Endothelial cell of umbilical vein (primary cell): ENCODE measurements at regions of chr4 and their contacts with region 1.

Region 1: DNA sequence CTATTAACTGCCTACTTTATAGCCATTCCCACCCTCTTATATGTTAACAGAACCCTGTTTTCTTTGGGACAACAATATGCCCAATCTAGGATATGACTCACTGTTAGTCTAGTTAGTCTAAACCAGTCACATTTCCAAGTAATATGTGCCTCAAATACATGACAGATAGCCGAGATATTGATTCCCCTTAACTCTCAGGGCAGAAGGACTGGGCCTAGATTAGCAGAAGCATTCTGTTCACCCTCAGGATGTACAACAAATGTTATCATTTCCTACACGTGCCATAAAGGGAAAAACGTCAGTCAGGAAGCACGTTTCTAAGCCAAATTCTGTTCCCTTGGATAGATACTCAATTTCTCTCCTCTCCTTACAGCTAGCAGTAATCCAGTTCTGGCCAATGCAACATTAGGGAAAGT is 114.1 kb downstream of the SLC10A7 start:
- DNase-seq: peak; percentile 99
- H3K4me3 ChIP-seq: peak overlapping the region in 1 of 3 experiments; percentile 29
- H3K27ac ChIP-seq: peak overlapping the region; percentile 97
- H3K4me1 ChIP-seq: peaks cover 26% of the 10 kb centered on the region
- H3K27me3 ChIP-seq: no peaks in the 10 kb centered on the region
- CTCF ChIP-seq: no peak
- POLR2A ChIP-seq: peak; percentile 52

Region 2: GRCh38 chr4:146333187-146333894 is 74.3 kb before region 1 on chr4:
- CTCF ChIA-PET with region 1: no interaction called
- POLR2A ChIA-PET with region 1: no interaction called
- dilution Hi-C with region 1: no loop called
- intact Hi-C with region 1: no loop called
- DNase-seq: no peak
- H3K4me3 ChIP-seq: no peak overlapping the region
- H3K27ac ChIP-seq: no peak overlapping the region
- H3K4me1 ChIP-seq: peaks cover 49% of the 10 kb centered on the region
- H3K27me3 ChIP-seq: no peaks in the 10 kb centered on the region
- CTCF ChIP-seq: no peak
- POLR2A ChIP-seq: no peak

Region 3: DNA sequence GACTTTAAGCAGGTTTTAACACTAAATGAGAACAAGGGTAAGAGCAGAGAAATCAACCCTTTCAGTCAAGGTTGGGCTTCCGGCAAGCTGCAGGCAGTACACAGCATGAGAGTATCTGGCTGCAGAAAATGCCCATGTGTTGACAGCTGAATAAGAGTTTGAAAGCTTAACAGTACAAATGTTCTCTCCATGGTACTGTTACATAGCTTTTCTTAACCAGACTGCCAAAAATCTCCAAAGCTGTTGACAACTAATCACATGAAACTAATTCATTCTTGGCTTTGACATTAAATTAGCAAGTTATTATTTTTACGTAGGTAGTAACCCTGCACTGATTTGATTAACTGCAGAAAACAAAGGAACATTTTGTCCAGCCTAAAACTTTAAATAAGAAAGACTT is 39.5 kb before region 1 on chr4:
- CTCF ChIA-PET with region 1: interaction called, 5 read pairs
- POLR2A ChIA-PET with region 1: interaction called, 4 read pairs
- dilution Hi-C with region 1: no loop called
- intact Hi-C with region 1: loop called (anchors 1 kb)
- DNase-seq: peak; percentile 80
- H3K4me3 ChIP-seq: no peak overlapping the region
- H3K27ac ChIP-seq: peak overlapping the region; percentile 59
- H3K4me1 ChIP-seq: peaks cover 47% of the 10 kb centered on the region
- H3K27me3 ChIP-seq: no peaks in the 10 kb centered on the region
- CTCF ChIP-seq: no peak
- POLR2A ChIP-seq: no peak

Region 4: DNA sequence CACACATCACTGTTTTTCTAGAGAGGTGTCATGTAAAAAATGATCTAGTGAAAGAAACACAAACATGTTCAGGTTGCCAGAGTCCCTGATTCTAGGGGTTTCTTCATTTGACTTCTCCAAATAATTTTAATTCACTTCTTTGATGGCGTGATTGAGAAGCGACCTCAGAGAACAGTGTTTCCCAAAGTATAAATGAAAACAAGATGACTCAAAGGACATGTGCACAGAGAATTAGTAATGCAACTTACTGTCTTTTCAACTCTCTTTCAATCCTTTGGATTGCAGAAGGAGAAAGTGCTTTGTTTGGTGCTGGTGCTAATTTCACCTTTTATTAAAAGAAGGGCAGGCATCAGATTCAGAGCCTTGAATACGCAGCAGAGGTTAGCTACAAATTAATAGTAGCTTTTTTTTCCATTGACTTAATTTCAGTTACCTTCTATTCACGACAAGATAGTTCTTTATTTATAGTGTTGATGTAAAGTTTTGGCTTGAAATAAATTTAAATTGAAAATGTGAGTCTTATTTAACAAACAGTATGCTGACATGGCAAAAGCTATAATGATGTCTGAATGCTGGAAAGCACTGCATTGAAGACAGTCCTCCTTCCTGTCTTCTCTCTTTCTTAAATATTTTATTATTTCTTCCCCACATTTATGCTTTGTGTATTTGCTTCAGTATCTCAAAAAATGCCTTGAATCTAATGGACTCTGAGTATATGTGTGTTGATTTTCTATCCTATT is 28.9 kb after region 1 on chr4:
- CTCF ChIA-PET with region 1: interaction called, 3 read pairs
- POLR2A ChIA-PET with region 1: no interaction called
- dilution Hi-C with region 1: no loop called
- intact Hi-C with region 1: loop called (anchors 2 kb)
- DNase-seq: peak; percentile 6
- H3K4me3 ChIP-seq: no peak overlapping the region
- H3K27ac ChIP-seq: no peak overlapping the region
- H3K4me1 ChIP-seq: peaks cover 15% of the 10 kb centered on the region
- H3K27me3 ChIP-seq: no peaks in the 10 kb centered on the region
- CTCF ChIP-seq: no peak
- POLR2A ChIP-seq: no peak

Region 5: GRCh38 chr4:146472404-146472803 is 64.7 kb after region 1 on chr4:
- CTCF ChIA-PET with region 1: interaction called, 3 read pairs
- POLR2A ChIA-PET with region 1: no interaction called
- dilution Hi-C with region 1: no loop called
- intact Hi-C with region 1: loop called (anchors 1 kb)
- DNase-seq: no peak
- H3K4me3 ChIP-seq: no peak overlapping the region
- H3K27ac ChIP-seq: no peak overlapping the region
- H3K4me1 ChIP-seq: peaks cover 18% of the 10 kb centered on the region
- H3K27me3 ChIP-seq: no peaks in the 10 kb centered on the region
- CTCF ChIP-seq: no peak
- POLR2A ChIP-seq: no peak

Region 6: DNA sequence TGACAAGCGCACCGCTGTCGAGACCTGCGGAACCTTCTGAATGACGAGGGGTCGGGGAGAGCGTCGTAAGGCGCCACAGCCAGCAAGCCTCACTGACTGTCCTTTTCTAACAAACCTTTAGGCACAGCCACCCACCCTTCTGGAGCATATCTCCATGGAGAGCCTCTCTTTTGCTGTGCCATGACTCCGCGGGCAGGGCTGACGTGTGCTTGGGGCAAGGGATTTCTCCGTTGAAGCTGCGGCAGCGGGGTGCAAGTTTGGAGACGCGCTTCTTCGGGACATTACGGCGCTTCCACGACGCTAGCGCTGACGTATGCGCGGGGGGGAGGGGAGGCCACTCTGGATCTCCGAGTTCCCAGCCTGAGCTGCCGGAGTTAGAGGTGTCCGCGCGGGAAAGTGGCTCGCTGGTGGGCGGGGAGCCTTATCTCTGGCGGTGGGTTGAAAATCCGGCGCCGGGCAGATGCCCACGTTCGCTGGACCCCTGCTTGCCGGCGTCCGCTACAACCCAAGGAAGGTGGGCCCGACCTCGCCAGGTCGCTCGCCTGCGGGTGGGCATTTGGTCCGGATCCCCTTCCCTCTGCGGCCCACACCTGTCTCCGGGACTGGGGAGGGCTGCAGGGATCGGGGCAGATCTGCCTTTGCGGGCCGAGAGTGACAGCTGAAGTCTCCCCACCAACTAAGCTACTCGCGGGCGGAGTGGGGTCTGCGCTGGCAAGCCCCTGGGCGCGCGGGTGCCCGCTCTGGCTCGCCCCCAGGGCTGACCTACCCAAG is 114.6 kb after region 1 on chr4:
- CTCF ChIA-PET with region 1: no interaction called
- POLR2A ChIA-PET with region 1: interaction called, 3 read pairs
- dilution Hi-C with region 1: no loop called
- intact Hi-C with region 1: loop called (anchors 1 kb)
- DNase-seq: peak; percentile 85
- H3K4me3 ChIP-seq: peak overlapping the region; percentile 84 to 99 (median 90)
- H3K27ac ChIP-seq: peak overlapping the region; percentile 73
- H3K4me1 ChIP-seq: peaks cover 17% of the 10 kb centered on the region
- H3K27me3 ChIP-seq: no peaks in the 10 kb centered on the region
- CTCF ChIP-seq: no peak
- POLR2A ChIP-seq: peak; percentile 38